ENCODE measurements at regions of chr9 and their contacts with region 1.

Region 1: GRCh38 chr9:27276193-27277030 is 20.5 kb downstream of the EQTN start:
- DNase-seq: peak; percentile 55
- H3K4me3 ChIP-seq: no peak overlapping the region
- H3K27ac ChIP-seq: no peak overlapping the region
- H3K4me1 ChIP-seq: no peaks in the 10 kb centered on the region
- H3K27me3 ChIP-seq: no peaks in the 10 kb centered on the region
- CTCF ChIP-seq: peak; percentile 60

Region 2: GRCh38 chr9:27033823-27034403 is 242.5 kb before region 1 on chr9:
- CTCF ChIA-PET with region 1: no interaction called
- POLR2A ChIA-PET with region 1: no interaction called
- intact Hi-C with region 1: loop called (anchors 2 kb)
- DNase-seq: peak; percentile 35
- H3K4me3 ChIP-seq: no peak overlapping the region
- H3K27ac ChIP-seq: no peak overlapping the region
- H3K4me1 ChIP-seq: no peaks in the 10 kb centered on the region
- H3K27me3 ChIP-seq: no peaks in the 10 kb centered on the region
- CTCF ChIP-seq: peak; percentile 62

Measured in A673 (cell line).